Dendritic cell treated with granulocyte-macrophage colony-stimulating factor and Interleukin-4, amounts not matched to agents 40 ng/mL and 50 ng/mL, for 4 days (primary cell): ENCODE measurements at regions of chr1 and their contacts with region 1.

Region 1: DNA sequence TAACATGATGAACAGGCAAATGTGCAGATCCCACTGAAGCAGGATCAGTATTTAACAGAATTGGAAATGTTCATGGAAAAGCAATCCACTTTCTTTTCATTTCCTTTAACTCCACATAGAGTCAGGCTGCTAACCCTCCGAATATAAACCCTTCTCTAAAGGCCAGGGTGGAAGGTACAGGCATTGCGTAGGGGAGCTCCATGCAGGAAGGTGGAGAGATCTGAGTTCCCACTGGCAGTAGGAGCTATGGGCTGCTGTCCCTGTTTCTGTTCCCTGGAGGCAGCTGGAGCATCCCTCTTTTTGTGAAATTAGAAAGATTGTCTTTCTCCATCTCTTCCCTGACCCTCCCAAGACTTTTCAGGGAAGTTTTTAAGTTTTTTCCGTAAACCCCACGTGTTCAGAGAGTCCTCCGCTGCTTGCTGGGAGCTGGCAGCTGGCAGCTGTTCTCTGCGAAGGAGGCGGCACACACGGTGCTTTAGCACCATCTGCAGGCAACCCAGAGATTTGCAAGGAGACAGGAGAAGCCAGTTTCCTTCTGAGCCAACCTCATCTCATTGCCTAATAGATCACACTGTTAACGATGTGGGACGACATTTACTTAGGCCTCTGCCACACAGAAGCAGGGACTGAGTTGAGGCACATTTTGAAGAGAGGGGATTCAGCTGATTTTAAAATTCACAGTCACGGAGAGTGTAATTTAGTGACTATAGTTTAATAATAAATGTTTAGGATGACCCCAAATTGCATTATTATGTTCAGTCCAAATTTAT is 55.4 kb upstream of the HOOK1 start:
- H3K4me3 Mint-ChIP-seq: peak overlapping the region; percentile 61
- H3K27ac Mint-ChIP-seq: peak overlapping the region; percentile 42
- H3K4me1 Mint-ChIP-seq: peaks cover 16% of the 10 kb centered on the region
- H3K27me3 Mint-ChIP-seq: no peaks in the 10 kb centered on the region

Region 2: GRCh38 chr1:59340411-59341307 is 418.7 kb before region 1 on chr1:
- intact Hi-C with region 1: no loop called
- H3K4me3 Mint-ChIP-seq: no peak overlapping the region
- H3K27ac Mint-ChIP-seq: no peak overlapping the region
- H3K4me1 Mint-ChIP-seq: no peaks in the 10 kb centered on the region
- H3K27me3 Mint-ChIP-seq: no peaks in the 10 kb centered on the region

Region 3: DNA sequence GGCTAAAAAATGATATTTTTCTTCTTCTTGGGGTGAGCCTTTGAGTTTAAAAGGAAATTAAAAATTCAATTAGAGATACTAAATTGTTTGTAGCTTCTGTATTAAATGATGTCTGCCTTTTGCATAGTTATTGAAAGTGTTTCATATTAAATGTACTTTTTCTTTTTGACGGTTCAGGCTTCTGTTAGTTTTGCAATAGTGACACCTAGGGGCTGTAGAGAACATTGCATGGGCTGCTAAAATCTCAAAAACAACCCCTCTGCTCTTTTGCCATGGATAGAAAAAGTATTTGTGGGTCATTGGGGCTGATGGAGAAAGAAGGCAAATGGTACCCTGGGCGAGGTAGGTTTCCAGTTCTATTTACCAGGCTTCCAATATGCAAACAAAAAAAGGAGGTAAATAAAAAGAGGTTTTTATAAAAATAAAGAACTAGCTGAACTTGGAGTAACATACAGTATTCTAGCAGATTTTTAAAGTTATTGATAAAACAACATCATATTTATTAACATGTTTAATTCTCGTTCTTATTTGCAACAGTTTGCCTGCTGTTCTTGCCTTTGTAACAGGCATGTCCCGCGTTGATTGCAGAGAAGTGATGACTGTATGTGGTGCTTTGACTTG is 60.0 kb before region 1 on chr1:
- intact Hi-C with region 1: loop called (anchors 2 kb)
- H3K4me3 Mint-ChIP-seq: no peak overlapping the region
- H3K27ac Mint-ChIP-seq: no peak overlapping the region
- H3K4me1 Mint-ChIP-seq: peaks cover 40% of the 10 kb centered on the region
- H3K27me3 Mint-ChIP-seq: no peaks in the 10 kb centered on the region

Region 4: DNA sequence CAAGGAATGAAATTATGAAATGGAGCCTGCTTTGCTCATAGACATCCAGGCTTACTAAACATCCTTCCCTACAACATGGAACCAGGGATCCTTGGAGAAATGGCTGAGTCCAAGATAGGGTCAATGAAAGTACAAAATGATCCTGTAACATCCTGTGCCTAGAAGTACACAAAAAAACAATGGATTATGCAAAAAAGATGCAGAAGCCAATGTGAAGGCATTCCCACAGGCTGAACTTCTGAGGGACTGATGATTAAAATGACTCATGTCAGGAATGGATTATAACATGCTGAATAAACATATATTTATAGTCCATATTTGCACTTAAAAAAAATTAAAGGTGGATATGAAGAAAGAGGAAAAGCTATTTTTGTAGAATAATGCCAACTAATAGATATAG is 45.0 kb after region 1 on chr1:
- intact Hi-C with region 1: no loop called
- H3K4me3 Mint-ChIP-seq: no peak overlapping the region
- H3K27ac Mint-ChIP-seq: no peak overlapping the region
- H3K4me1 Mint-ChIP-seq: no peaks in the 10 kb centered on the region
- H3K27me3 Mint-ChIP-seq: peaks cover 7% of the 10 kb centered on the region

Region 5: DNA sequence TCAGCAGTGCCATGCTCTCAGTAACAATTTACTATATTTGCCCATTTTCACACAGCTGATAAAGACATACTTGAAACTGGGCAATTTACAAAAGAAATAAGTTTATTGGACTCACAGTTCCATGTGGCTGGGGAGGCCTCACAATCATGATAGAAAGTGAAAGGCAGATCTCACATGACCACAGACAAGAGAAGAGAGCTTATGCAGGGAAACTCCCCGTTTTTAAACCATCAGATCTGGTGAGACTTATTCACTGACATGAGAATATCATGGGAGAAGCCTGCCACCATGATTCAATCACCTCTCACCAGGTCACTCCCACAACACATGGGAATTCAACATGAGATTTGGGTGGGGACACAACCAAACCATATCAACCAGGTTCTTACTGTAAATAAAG is 426.3 kb after region 1 on chr1:
- intact Hi-C with region 1: no loop called
- H3K4me3 Mint-ChIP-seq: no peak overlapping the region
- H3K27ac Mint-ChIP-seq: no peak overlapping the region
- H3K4me1 Mint-ChIP-seq: no peaks in the 10 kb centered on the region
- H3K27me3 Mint-ChIP-seq: no peaks in the 10 kb centered on the region